Gastrocnemius medialis (tissue), 4 donors: ENCODE measurements at regions of chr19 and their contacts with region 1.

Region 1: DNA sequence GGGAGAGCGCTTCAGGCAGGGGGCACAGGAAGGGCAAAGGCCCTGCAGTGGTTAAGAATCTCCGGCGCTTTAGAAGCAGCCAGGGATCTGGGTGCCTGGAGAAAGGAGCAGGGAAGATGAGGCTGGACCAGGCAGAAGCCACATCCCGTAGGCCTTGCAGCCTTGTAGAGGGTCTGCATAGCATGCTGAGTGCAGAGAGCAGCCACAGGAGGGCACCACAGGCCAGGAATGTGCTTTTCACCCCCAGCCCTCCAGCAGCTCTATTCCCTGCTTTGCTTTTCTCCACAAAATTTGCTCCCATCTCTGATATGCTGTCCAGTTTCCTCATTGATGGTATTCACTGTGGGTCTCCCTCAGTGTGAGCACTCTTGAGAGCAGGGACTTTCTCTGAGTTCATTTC is 5.7 kb downstream of the WDR62 start:
- DNase-seq: peak in 1 of 2 donors; percentile 34
- ATAC-seq: peak; percentile 63 to 87
- H3K4me3 ChIP-seq: no peak overlapping the region
- H3K27ac ChIP-seq: peak overlapping the region in 1 of 4 donors; percentile 45
- H3K4me1 ChIP-seq: peaks cover 2 to 6% of the 10 kb centered on the region in 2 donors
- H3K27me3 ChIP-seq: no peaks in the 10 kb centered on the region
- CTCF ChIP-seq: peak; percentile 26 to 59 (median 38)
- POLR2A ChIP-seq: no peak

Region 2: GRCh38 chr19:36103626-36104552 is 43.5 kb after region 1 on chr19:
- in situ Hi-C with region 1: no loop called
- intact Hi-C with region 1: loop called (anchors 5 kb)
- DNase-seq: no peak
- ATAC-seq: no peak
- H3K4me3 ChIP-seq: no peak overlapping the region
- H3K27ac ChIP-seq: peak overlapping the region in 2 of 4 donors; percentile 38 to 42
- H3K4me1 ChIP-seq: peaks cover 27 to 41% of the 10 kb centered on the region in 2 donors
- H3K27me3 ChIP-seq: no peaks in the 10 kb centered on the region
- CTCF ChIP-seq: no peak
- POLR2A ChIP-seq: no peak

Region 3: DNA sequence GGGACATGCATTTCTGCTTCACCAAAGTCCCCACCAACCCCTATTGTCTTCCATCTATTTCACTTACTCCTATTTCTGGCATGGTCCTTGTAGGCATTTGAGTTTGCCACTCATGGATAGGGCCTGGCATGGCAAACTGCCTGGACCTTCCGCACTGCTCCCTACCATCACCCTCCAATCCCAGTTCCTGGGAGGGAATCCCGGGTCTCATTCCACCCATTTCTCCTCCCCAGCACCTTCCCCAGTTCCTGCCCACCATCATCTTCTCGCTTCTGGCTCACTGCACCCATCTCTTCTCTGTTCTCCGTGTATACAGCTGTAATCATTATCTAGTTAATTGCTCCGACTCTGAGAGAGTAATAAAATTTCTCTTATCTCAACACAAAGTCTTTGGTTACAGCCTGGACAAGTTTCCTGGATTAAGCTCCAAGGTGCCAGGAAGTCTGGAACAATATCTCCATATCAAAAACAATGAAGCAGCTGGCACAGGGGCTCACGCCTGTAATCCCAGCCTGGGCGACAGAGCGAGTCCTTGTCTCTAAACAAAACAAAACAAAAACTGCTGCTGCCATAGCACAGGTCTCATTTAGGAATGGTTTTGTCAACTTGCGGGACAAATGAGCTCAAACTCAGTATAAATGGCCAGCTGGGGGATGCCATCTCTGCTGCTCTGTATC is 108.8 kb after region 1 on chr19:
- in situ Hi-C with region 1: loop called in 1 of 4 experiments (anchors 5 kb)
- intact Hi-C with region 1: loop called (anchors 1 kb)
- DNase-seq: peak in 1 of 2 donors; percentile 34
- ATAC-seq: peak; percentile 29 to 41
- H3K4me3 ChIP-seq: no peak overlapping the region
- H3K27ac ChIP-seq: peak overlapping the region; percentile 57 to 84 (median 72)
- H3K4me1 ChIP-seq: peaks cover 10 to 13% of the 10 kb centered on the region in 2 donors
- H3K27me3 ChIP-seq: no peaks in the 10 kb centered on the region
- CTCF ChIP-seq: no peak
- POLR2A ChIP-seq: no peak

Region 4: GRCh38 chr19:36514012-36514612 is 453.7 kb after region 1 on chr19:
- in situ Hi-C with region 1: no loop called
- intact Hi-C with region 1: no loop called
- DNase-seq: no peak
- ATAC-seq: no peak
- H3K4me3 ChIP-seq: peak overlapping the region in 1 of 4 donors; percentile 17
- H3K27ac ChIP-seq: no peak overlapping the region
- H3K4me1 ChIP-seq: no peaks in the 10 kb centered on the region
- H3K27me3 ChIP-seq: no peaks in the 10 kb centered on the region
- CTCF ChIP-seq: no peak
- POLR2A ChIP-seq: no peak